Endothelial cell of umbilical vein (primary cell): ENCODE measurements at regions of chr22 and their contacts with region 1.

Region 1: DNA sequence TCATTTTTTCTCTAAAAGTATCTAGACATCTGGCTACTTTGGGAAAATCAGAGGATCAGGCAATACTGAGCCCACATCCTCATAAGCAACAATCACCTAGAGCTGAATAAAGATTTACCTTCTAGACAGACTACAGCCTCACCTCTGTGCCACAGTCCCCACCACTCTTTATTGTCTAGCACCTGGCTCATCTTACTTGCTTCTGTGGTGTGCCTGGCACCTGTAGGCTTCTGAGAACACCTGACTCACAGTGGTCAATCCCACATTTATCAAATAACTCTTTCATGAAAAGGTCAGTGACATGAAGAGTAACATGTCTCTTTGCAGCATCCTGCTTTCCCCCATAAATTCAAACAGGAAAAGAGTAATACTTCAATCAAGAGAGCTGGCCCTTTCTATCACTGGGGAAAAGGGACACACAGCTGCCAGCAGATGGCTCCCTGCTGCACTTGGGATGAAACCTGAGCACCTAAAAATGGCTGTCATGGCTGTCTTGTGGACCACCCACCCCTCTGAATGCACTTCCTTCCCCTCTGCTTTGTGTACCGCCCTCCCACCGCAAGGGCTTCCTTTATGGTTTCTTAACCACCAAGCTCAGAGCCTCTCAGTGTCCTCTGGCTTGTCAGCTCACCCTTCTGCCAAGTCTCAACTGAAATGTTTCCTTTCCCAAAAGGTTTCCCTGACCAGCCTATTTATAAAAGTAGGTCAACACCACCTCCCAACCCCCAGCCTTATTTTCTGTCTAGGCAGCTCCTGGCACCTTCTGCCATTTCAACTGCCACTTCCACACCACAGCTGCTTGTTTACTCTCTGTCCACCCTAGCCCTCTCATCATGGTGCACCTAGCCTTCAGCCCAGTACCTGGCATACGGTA is 9.3 kb downstream of the TFIP11 start:
- DNase-seq: peak; percentile 64
- H3K4me3 ChIP-seq: no peak overlapping the region
- H3K27ac ChIP-seq: peak overlapping the region; percentile 39
- H3K4me1 ChIP-seq: peaks cover 27% of the 10 kb centered on the region
- H3K27me3 ChIP-seq: no peaks in the 10 kb centered on the region
- CTCF ChIP-seq: peak; percentile 63 to 76
- POLR2A ChIP-seq: no peak

Region 2: DNA sequence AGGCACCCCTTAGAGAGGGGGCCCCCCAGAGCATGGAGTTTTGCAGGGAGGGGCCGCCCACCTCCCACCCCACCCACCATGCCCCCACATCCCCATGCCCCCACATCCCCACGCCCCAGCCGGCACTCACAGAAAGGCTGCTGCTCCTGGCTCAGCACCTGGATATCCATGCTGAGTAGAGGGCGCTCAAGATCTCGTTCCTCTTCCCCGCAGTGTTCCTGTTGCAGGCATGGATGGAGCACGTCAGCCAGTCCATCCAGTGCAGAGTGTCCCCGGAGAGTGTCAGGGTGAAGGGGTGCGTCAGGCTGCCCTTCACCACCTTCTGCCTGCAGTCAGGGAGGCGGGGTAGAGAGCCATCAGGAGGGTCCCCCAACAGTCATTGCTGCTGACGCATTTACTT is 1127.2 kb before region 1 on chr22:
- CTCF ChIA-PET with region 1: no interaction called
- POLR2A ChIA-PET with region 1: no interaction called
- dilution Hi-C with region 1: no loop called
- intact Hi-C with region 1: no loop called
- DNase-seq: no peak
- H3K4me3 ChIP-seq: no peak overlapping the region
- H3K27ac ChIP-seq: no peak overlapping the region
- H3K4me1 ChIP-seq: no peaks in the 10 kb centered on the region
- H3K27me3 ChIP-seq: no peaks in the 10 kb centered on the region
- CTCF ChIP-seq: no peak
- POLR2A ChIP-seq: no peak

Region 3: DNA sequence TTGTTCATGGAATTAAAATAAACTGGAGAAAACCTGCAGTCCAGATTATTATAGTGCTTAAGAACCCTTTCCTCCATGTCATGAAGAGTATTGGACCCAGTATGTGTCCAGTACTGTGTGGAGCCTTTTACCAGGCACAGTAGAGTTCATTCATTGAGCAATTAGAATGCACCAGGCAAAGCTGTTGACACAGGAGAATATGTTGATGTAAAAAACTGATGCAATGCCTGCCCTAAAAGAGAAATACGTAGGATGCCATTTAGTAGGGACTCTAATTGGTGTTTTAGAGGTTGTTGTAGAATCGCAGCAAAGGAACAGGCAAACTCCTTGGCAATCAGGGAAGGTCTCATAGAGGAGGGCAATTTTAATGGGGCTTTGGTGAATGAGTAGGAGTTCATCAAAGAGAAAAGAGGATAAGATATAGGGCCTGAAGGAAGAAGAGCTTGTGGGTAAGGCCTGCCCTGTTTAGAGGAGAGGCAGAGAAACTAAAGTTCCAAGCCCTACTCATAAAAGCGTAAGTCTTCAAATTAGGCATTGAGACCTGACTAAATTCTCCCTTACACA is 207.3 kb before region 1 on chr22:
- CTCF ChIA-PET with region 1: no interaction called
- POLR2A ChIA-PET with region 1: no interaction called
- dilution Hi-C with region 1: no loop called
- intact Hi-C with region 1: no loop called
- DNase-seq: no peak
- H3K4me3 ChIP-seq: no peak overlapping the region
- H3K27ac ChIP-seq: no peak overlapping the region
- H3K4me1 ChIP-seq: no peaks in the 10 kb centered on the region
- H3K27me3 ChIP-seq: no peaks in the 10 kb centered on the region
- CTCF ChIP-seq: no peak
- POLR2A ChIP-seq: no peak

Region 4: DNA sequence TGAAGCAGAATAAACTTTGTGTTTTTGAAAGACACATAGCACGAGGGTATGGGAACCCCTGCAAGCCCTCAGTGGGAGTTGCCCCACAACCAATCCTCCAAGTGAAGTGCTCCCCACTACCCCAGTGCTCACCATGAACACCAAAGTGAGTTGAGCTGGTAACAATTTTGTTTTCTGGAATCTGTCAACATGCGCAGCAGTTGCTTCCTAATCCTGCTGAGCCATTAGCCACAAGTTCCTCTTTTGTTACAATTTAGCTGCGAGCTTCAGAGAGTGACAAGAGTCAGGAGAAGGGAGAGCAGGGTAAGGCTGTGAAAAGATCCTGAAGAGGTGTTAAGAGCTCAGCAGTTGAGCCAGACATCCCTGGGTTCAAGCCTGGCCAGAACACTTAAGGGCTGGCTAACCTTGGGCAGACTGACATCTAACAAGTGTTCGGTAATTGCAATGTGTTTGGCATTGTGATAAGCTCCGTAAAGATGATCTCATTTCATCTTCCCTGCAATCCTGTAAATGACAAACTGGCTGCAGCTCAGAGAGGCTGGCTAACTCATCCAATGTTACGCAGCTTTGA is 98.0 kb before region 1 on chr22:
- CTCF ChIA-PET with region 1: no interaction called
- POLR2A ChIA-PET with region 1: no interaction called
- dilution Hi-C with region 1: no loop called
- intact Hi-C with region 1: no loop called
- DNase-seq: no peak
- H3K4me3 ChIP-seq: no peak overlapping the region
- H3K27ac ChIP-seq: no peak overlapping the region
- H3K4me1 ChIP-seq: no peaks in the 10 kb centered on the region
- H3K27me3 ChIP-seq: peaks cover 14 to 17% of the 10 kb centered on the region in 2 experiments
- CTCF ChIP-seq: no peak
- POLR2A ChIP-seq: no peak

Region 5: DNA sequence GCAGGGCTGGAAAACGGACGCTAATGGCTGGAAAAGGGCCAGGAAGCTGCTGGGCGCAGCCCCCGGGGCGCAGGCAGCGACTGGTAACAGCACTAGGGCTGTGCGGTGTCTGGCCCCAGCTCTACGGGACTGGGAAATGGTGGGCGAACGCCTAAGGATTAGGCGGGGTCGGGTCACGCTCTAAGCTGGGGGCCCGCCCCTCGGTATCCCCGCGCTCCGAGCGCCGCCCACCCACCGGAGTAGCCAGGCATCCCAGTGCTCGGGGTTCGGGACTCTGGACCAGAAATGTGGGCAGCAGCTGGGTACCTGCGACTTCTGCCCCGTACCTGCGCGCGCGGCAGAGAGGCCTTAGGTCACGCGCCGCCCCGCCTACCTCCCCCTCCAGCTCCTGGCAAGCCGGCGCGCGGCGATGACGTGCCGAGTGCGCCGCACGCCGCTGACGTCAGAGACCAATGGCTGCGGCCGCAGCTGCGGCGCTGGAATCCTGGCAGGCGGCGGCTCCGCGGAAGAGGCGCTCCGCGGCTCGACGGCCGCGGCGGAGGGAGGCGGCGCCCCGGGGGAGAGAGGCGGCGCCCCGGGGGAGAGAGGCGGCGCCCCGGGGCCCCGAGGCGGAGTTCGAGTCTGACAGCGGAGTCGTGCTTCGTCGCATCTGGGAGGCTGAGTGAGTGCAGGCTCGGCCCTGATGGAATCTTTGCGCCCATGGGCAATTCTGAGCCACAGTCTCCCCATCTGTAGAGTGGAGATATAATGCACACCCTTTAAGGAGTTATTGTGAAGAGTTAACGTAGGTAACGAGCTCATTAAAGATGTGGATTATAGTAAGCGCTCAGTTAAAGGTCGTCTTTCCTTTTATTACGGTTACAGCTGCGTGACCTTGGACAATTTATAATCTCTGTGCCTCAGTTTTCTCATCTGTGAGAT is 19.2 kb before region 1 on chr22 and contains the starts of genes HPS4 and SRRD:
- CTCF ChIA-PET with region 1: interaction called, 9 read pairs
- POLR2A ChIA-PET with region 1: interaction called, 13 read pairs
- dilution Hi-C with region 1: no loop called
- intact Hi-C with region 1: no loop called
- DNase-seq: peak; percentile 89
- H3K4me3 ChIP-seq: peak within 1 kb of the TSS; percentile 80 to 97 (median 92)
- H3K27ac ChIP-seq: peak within 1 kb of the TSS; percentile 86
- H3K4me1 ChIP-seq: peaks cover 23% of the 10 kb centered on the region
- H3K27me3 ChIP-seq: no peaks in the 10 kb centered on the region
- CTCF ChIP-seq: no peak
- POLR2A ChIP-seq: peak; percentile 83
- total RNA-seq, gene HPS4: 29.7 and 34.9 TPM in 2 replicates
- total RNA-seq, gene SRRD: 24.2 and 28.5 TPM in 2 replicates

Region 6: GRCh38 chr22:26534874-26535602 is 32.1 kb after region 1 on chr22:
- CTCF ChIA-PET with region 1: no interaction called
- POLR2A ChIA-PET with region 1: no interaction called
- dilution Hi-C with region 1: no loop called
- intact Hi-C with region 1: no loop called
- DNase-seq: no peak
- H3K4me3 ChIP-seq: no peak overlapping the region
- H3K27ac ChIP-seq: no peak overlapping the region
- H3K4me1 ChIP-seq: no peaks in the 10 kb centered on the region
- H3K27me3 ChIP-seq: no peaks in the 10 kb centered on the region
- CTCF ChIP-seq: no peak
- POLR2A ChIP-seq: no peak